Psoas muscle (tissue), 8 donors: ENCODE measurements at regions of chr5 and their contacts with region 1.

Region 1: GRCh38 chr5:134845852-134846640 is at the start of gene C5orf24:
- DNase-seq: peak; percentile 96 to 98
- ATAC-seq: peak; percentile 97 to 99 (median 98)
- H3K4me3 ChIP-seq: peak within 1 kb of the TSS; percentile 88
- H3K27ac ChIP-seq: peak within 1 kb of the TSS; percentile 96
- H3K4me1 ChIP-seq: peaks cover 19% of the 10 kb centered on the region
- H3K27me3 ChIP-seq: no peaks in the 10 kb centered on the region
- CTCF ChIP-seq: no peak
- total RNA-seq, gene C5orf24: 24.7 to 28.3 (median 25.3) TPM

Region 2: GRCh38 chr5:134738133-134738962 is 107.7 kb before region 1 on chr5 and contains the start of gene CAMLG:
- intact Hi-C with region 1: loop called in 1 of 2 experiments (anchors 2 kb)
- DNase-seq: peak; percentile 99
- ATAC-seq: peak; percentile 98 to 99 (median 99)
- H3K4me3 ChIP-seq: peak within 1 kb of the TSS; percentile 96
- H3K27ac ChIP-seq: peak within 1 kb of the TSS; percentile 97
- H3K4me1 ChIP-seq: peaks cover 13% of the 10 kb centered on the region
- H3K27me3 ChIP-seq: no peaks in the 10 kb centered on the region
- CTCF ChIP-seq: peak; percentile 37
- total RNA-seq, gene CAMLG: 25.8 to 44.9 (median 29.6) TPM

Region 3: DNA sequence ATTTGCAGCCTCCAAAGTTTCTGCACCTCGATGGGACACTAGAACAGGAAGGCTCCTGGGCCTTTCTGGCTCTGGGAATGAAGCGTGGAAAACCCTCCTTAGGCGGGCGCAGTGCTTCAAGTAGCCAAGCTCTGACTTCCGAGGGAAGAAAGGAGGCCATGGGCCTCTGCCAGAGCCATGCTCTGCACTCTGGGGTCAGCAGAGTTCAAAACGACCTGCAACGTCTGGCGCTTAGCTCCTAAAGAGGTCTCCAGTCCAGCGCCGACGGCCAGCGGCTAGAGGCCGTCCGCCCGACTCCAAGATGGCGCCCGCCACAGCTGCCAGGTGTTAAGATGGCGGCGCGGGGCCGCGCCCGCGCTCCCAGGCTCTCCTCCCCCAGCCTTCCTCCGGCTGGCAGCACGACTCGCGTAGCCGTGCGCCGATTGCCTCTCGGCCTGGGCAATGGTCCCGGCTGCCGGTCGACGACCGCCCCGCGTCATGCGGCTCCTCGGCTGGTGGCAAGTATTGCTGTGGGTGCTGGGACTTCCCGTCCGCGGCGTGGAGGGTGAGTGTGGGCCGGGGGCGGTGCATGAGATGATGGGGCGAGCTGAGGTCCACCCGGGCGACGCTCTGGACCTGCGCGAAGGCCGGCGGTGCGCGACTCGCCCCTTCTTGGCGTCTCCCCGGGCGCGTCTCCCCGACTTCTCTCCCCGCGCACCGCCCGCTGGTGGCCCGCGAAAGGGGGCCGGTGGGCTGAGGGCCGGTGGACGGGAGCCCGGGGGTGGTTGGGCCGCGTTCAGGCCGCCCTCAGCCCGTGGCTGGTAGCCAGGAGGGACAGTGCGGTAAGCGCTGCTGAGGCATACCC is 28.2 kb after region 1 on chr5 and contains the start of gene TXNDC15:
- intact Hi-C with region 1: loop called in 1 of 2 experiments (anchors 1 kb)
- DNase-seq: peak; percentile 89 to 95
- ATAC-seq: peak; percentile 94 to 96 (median 96)
- H3K4me3 ChIP-seq: peak within 1 kb of the TSS; percentile 93
- H3K27ac ChIP-seq: peak within 1 kb of the TSS; percentile 97
- H3K4me1 ChIP-seq: peaks cover 9% of the 10 kb centered on the region
- H3K27me3 ChIP-seq: no peaks in the 10 kb centered on the region
- CTCF ChIP-seq: no peak
- total RNA-seq, gene TXNDC15: 21.1 to 32.0 (median 26.6) TPM

Region 4: DNA sequence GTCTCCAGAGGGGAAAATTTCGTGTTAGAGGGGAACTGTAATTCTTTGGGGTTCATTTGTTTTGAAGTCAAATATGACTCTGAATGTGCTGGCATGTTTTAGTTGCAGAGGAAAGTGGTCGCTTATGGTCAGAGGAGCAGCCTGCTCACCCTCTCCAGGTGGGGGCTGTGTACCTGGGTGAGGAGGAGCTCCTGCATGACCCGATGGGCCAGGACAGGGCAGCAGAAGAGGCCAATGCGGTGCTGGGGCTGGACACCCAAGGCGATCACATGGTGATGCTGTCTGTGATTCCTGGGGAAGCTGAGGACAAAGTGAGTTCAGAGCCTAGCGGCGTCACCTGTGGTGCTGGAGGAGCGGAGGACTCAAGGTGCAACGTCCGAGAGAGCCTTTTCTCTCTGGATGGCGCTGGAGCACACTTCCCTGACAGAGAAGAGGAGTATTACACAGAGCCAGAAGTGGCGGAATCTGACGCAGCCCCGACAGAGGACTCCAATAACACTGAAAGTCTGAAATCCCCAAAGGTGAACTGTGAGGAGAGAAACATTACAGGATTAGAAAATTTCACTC is 41.6 kb after region 1 on chr5:
- intact Hi-C with region 1: no loop called
- DNase-seq: no peak
- ATAC-seq: no peak
- H3K4me3 ChIP-seq: no peak overlapping the region
- H3K27ac ChIP-seq: no peak overlapping the region
- H3K4me1 ChIP-seq: no peaks in the 10 kb centered on the region
- H3K27me3 ChIP-seq: no peaks in the 10 kb centered on the region
- CTCF ChIP-seq: no peak

Region 5: GRCh38 chr5:134904630-134905245 is 58.7 kb after region 1 on chr5 and contains the start of gene PCBD2:
- intact Hi-C with region 1: loop called (anchors 2 to 10 kb)
- DNase-seq: peak; percentile 92 to 96
- ATAC-seq: peak; percentile 89 to 92 (median 89)
- H3K4me3 ChIP-seq: peak within 1 kb of the TSS; percentile 71
- H3K27ac ChIP-seq: peak within 1 kb of the TSS; percentile 99
- H3K4me1 ChIP-seq: no peaks in the 10 kb centered on the region
- H3K27me3 ChIP-seq: no peaks in the 10 kb centered on the region
- CTCF ChIP-seq: peak; percentile 83
- total RNA-seq, gene PCBD2: 23.8 to 29.9 (median 26.0) TPM